Activated T-helper 1 cell treated with anti-CD3 and anti-CD28 coated beads, Interleukin-12 subunit alpha, Interleukin-12 subunit beta, Interleukin-2, Interleukin-4 antibody, amounts not matched to agents 30 ng/mL and 10 ng/mL and 1 ng/mL, durations not matched to agents 14 hours and 24 hours and 36 hours (primary cell): ENCODE measurements at regions of chr7 and their contacts with region 1.

Region 1: DNA sequence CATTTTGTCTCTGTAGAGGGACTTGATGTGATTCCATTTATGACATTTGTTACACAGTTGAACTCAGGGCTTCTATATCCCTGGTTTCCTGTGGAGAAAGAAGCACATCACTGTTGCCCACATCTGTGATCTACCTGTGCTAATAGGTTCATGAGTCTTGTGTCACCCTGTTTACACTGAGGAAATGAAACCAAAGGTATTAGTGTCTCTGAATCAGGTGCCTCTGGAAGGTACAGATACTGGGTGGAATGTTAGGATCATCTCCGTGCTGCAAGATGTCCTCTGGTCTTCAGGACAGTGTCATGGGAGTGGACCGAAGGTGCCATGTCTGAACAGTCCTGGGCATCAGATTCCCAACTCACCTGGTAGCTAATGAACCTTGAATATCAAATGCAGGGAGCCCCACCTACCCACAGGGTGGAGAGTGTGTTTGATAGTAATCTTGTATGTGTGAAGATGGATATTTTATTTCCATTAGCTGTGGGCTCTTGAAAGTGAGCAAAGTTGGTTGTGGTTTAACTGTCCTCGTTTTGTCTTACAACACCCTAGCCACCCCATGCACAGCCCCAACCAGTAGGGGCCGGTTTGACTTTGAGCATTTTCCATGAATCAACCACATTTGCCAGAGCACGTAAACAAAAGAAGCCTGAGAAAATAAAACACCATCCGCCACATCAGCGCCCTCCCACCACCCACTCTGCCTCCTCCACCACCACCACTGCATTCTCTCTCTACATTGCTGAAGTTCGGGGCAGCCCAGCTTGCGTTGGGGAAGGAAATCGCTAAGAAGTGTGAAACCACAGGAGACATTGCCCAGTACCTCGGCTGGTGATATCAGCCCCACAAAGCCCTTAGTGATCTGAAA is 40.7 kb downstream of the TARP start:
- DNase-seq: peak; percentile 78
- H3K4me3 Mint-ChIP-seq: peak overlapping the region; percentile 69
- H3K27ac Mint-ChIP-seq: peak overlapping the region; percentile 91
- H3K4me1 Mint-ChIP-seq: peaks cover 73% of the 10 kb centered on the region
- H3K27me3 Mint-ChIP-seq: peaks cover 3% of the 10 kb centered on the region

Region 2: GRCh38 chr7:38160003-38160571 is 72.6 kb before region 1 on chr7:
- intact Hi-C with region 1: no loop called
- DNase-seq: no peak
- H3K4me3 Mint-ChIP-seq: no peak overlapping the region
- H3K27ac Mint-ChIP-seq: no peak overlapping the region
- H3K4me1 Mint-ChIP-seq: no peaks in the 10 kb centered on the region
- H3K27me3 Mint-ChIP-seq: peaks cover 27% of the 10 kb centered on the region

Region 3: GRCh38 chr7:38171623-38172391 is 60.9 kb before region 1 on chr7:
- intact Hi-C with region 1: loop called (anchors 1 kb)
- DNase-seq: no peak
- H3K4me3 Mint-ChIP-seq: no peak overlapping the region
- H3K27ac Mint-ChIP-seq: no peak overlapping the region
- H3K4me1 Mint-ChIP-seq: peaks cover 30% of the 10 kb centered on the region
- H3K27me3 Mint-ChIP-seq: peaks cover 26% of the 10 kb centered on the region

Region 4: GRCh38 chr7:38215735-38216670 is 16.7 kb before region 1 on chr7:
- intact Hi-C with region 1: loop called (anchors 1 kb)
- DNase-seq: peak; percentile 63
- H3K4me3 Mint-ChIP-seq: no peak overlapping the region
- H3K27ac Mint-ChIP-seq: no peak overlapping the region
- H3K4me1 Mint-ChIP-seq: peaks cover 45% of the 10 kb centered on the region
- H3K27me3 Mint-ChIP-seq: no peaks in the 10 kb centered on the region

Region 5: GRCh38 chr7:38311329-38311937 is 78.7 kb after region 1 on chr7:
- intact Hi-C with region 1: loop called (anchors 2 kb)
- DNase-seq: no peak
- H3K4me3 Mint-ChIP-seq: peak overlapping the region; percentile 73
- H3K27ac Mint-ChIP-seq: peak overlapping the region; percentile 78
- H3K4me1 Mint-ChIP-seq: peaks cover 11% of the 10 kb centered on the region
- H3K27me3 Mint-ChIP-seq: no peaks in the 10 kb centered on the region

Region 6: GRCh38 chr7:38369816-38370493 is 137.2 kb after region 1 on chr7:
- intact Hi-C with region 1: loop called (anchors 1 kb)
- DNase-seq: peak; percentile 61
- H3K4me3 Mint-ChIP-seq: no peak overlapping the region
- H3K27ac Mint-ChIP-seq: peak overlapping the region; percentile 41
- H3K4me1 Mint-ChIP-seq: peaks cover 40% of the 10 kb centered on the region
- H3K27me3 Mint-ChIP-seq: no peaks in the 10 kb centered on the region

Region 7: GRCh38 chr7:38908759-38909335 is 676.1 kb after region 1 on chr7 and contains the start of gene VPS41:
- intact Hi-C with region 1: loop called (anchors 5 kb)
- DNase-seq: peak; percentile 72
- H3K4me3 Mint-ChIP-seq: peak within 1 kb of the TSS; percentile 97
- H3K27ac Mint-ChIP-seq: peak within 1 kb of the TSS; percentile 93
- H3K4me1 Mint-ChIP-seq: peaks cover 38% of the 10 kb centered on the region
- H3K27me3 Mint-ChIP-seq: peaks cover 2% of the 10 kb centered on the region
- total RNA-seq, gene VPS41: 52.9 and 56.3 TPM in 2 replicates